Right lobe of liver (tissue), 6 donors: ENCODE measurements at regions of chr3 and their contacts with region 1.

Region 1: GRCh38 chr3:183560607-183561006 is 5.1 kb upstream of the KLHL6 start:
- DNase-seq: no peak
- ATAC-seq: peak; percentile 81 to 88 (median 82)
- H3K4me3 ChIP-seq: no peak overlapping the region
- H3K27ac ChIP-seq: no peak overlapping the region
- H3K4me1 ChIP-seq: no peaks in the 10 kb centered on the region
- H3K27me3 ChIP-seq: no peaks in the 10 kb centered on the region
- CTCF ChIP-seq: peak; percentile 40 to 59 (median 44)
- POLR2A ChIP-seq: no peak

Region 2: DNA sequence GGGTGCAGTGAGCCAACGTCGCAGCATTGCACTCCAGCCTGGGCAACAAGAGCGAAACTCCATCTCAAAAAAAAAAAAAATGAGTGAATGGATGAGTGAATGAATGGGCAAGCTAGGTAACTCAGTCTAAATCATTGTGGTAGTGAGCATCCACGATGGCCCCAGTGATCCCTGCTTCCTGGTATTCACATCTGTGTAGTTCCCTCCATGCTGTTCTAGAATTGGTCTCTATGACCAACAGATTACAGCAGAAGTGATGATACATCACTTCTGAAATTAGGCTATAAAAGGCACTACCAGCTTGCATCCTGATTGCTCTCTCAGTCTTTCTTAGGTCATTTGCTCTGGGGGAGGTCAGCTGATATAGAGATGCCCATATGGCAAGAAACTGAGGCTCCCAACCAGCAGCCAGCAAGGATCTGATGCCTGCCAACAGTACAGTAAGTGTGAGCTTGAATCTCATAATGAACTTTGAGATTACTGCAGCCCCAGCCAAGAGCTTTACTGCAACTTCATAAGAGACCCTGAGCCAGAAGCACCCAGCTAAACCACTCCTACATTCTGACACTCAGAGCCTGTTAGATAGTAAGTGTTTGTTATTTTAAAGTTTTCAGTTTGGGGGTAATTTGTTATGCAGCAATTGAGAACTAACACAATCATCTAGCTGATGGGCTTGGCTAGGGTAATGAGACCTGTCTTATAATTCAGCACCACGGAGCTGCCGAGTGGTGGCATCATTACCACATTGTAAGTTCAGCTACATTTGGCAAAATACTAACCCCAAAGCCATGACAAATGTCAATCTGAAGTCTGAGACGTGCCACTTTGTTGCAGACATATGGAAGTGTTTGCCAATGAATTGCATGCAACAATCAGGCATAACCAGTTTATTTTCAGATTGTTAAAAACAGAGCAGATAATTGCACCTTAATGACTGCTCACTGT is 58.1 kb before region 1 on chr3:
- intact Hi-C with region 1: loop called (anchors 10 kb)
- DNase-seq: peak in 1 of 3 donors; percentile 53
- ATAC-seq: peak; percentile 56 to 77 (median 64)
- H3K4me3 ChIP-seq: no peak overlapping the region
- H3K27ac ChIP-seq: no peak overlapping the region
- H3K4me1 ChIP-seq: peaks cover 0 to 17% (median 8%) of the 10 kb centered on the region in 4 donors
- H3K27me3 ChIP-seq: no peaks in the 10 kb centered on the region
- CTCF ChIP-seq: peak; percentile 37 to 55 (median 46)
- POLR2A ChIP-seq: no peak

Region 3: GRCh38 chr3:183823963-183824362 is 263.4 kb after region 1 on chr3:
- intact Hi-C with region 1: no loop called
- DNase-seq: no peak
- ATAC-seq: no peak
- H3K4me3 ChIP-seq: no peak overlapping the region
- H3K27ac ChIP-seq: no peak overlapping the region
- H3K4me1 ChIP-seq: peaks cover 0 to 16% (median 0%) of the 10 kb centered on the region in 4 donors
- H3K27me3 ChIP-seq: no peaks in the 10 kb centered on the region
- CTCF ChIP-seq: no peak
- POLR2A ChIP-seq: no peak